ENCODE measurements at regions of chr12 and their contacts with region 1.

Region 1: DNA sequence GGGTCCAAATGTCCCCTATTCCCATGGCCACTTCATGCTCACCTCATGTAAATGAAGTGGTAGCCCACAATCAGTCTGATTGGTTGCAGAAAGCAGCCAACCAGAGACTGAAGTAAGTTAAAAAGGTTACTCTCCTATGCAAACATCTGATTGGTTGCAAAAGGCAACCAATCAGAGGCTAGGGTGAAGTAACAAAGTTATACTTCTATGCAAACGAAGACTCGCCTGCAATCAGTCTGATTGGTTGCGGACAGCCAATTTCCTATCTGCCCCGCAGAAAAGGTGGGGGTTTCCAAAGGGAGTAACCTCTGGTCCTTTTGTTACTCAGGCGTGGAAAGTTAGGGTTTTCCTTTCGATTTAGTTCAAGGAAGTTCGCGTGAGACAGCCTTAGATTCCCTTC is 208.1 kb upstream of the NEDD1 start:
- DNase-seq: no peak
- ATAC-seq: no peak
- H3K4me3 ChIP-seq: no peak overlapping the region
- H3K4me3 Mint-ChIP-seq: no peak overlapping the region
- H3K27ac ChIP-seq: no peak overlapping the region
- H3K27ac Mint-ChIP-seq: no peak overlapping the region
- H3K4me1 ChIP-seq: no peaks in the 10 kb centered on the region
- H3K4me1 Mint-ChIP-seq: no peaks in the 10 kb centered on the region
- H3K27me3 ChIP-seq: no peaks in the 10 kb centered on the region
- H3K27me3 Mint-ChIP-seq: peaks cover 20% of the 10 kb centered on the region
- CTCF ChIP-seq: no peak

Region 2: GRCh38 chr12:95881331-95881955 is 817.5 kb before region 1 on chr12:
- CTCF ChIA-PET with region 1: no interaction called
- POLR2A ChIA-PET with region 1: no interaction called
- intact Hi-C with region 1: no loop called
- DNase-seq: no peak
- ATAC-seq: no peak
- H3K4me3 ChIP-seq: no peak overlapping the region
- H3K4me3 Mint-ChIP-seq: no peak overlapping the region
- H3K27ac ChIP-seq: no peak overlapping the region
- H3K27ac Mint-ChIP-seq: no peak overlapping the region
- H3K4me1 ChIP-seq: no peaks in the 10 kb centered on the region
- H3K4me1 Mint-ChIP-seq: no peaks in the 10 kb centered on the region
- H3K27me3 ChIP-seq: peaks cover 0 to 2% of the 10 kb centered on the region in 2 experiments
- H3K27me3 Mint-ChIP-seq: no peaks in the 10 kb centered on the region
- CTCF ChIP-seq: no peak

Region 3: GRCh38 chr12:96648923-96649322 is 50.0 kb before region 1 on chr12:
- CTCF ChIA-PET with region 1: no interaction called
- POLR2A ChIA-PET with region 1: no interaction called
- intact Hi-C with region 1: loop called in 1 of 2 experiments (anchors 1 kb)
- DNase-seq: no peak
- ATAC-seq: no peak
- H3K4me3 ChIP-seq: no peak overlapping the region
- H3K4me3 Mint-ChIP-seq: no peak overlapping the region
- H3K27ac ChIP-seq: no peak overlapping the region
- H3K27ac Mint-ChIP-seq: no peak overlapping the region
- H3K4me1 ChIP-seq: no peaks in the 10 kb centered on the region
- H3K4me1 Mint-ChIP-seq: no peaks in the 10 kb centered on the region
- H3K27me3 ChIP-seq: no peaks in the 10 kb centered on the region
- H3K27me3 Mint-ChIP-seq: no peaks in the 10 kb centered on the region
- CTCF ChIP-seq: no peak

Measured in CD8-positive, alpha-beta T cell (primary cell).